A549 (cell line): ENCODE measurements at regions of chr15 and their contacts with region 1.

Region 1: DNA sequence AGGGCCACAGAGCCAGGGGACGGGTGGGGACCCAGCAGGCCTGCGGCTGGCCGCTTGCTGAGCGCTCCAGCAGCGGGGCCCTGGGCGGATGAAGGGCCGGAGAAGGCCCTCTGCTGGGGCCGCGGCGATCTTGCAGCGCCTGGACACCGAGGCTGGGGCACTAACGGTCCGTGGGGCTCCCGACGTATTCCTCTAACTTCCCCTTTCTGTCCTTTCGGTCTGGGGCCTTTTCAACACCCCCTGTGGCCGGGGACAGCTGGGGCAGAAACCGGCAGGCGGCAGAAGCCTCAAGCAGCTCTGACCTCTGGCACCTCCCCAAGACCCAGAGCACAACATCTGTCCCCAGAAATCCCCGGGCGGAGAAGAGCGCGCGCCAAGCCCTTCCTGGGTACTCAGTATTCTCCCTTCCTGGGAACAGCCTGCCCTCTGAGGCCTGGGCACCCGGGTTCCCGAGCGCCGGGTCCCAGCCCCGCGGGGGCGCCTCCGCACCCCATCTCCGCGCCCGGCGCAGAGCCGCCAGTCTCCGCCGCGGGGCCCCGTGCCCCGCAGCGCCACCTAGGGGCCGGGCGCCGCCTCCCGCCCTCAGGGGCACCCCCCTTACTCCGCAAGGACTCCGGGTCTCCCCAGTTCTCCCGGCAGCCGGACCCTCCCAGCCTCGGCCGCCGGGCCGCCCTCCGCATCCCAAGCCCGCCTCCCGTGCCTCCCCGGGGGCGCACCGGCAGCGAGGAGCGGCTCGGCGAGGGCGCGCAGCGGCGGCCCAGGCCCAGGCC is 582 bp upstream of the SLCO3A1 start:
- DNase-seq: peak; percentile 79 to 92
- ATAC-seq: peak; percentile 77 to 88
- H3K4me3 ChIP-seq: peak overlapping the region; percentile 94
- H3K27ac ChIP-seq: peak overlapping the region; percentile 98 to 99
- H3K4me1 ChIP-seq: peaks cover 16% of the 10 kb centered on the region
- CTCF ChIP-seq: peak; percentile 99
- EP300 ChIP-seq: no peak
- POLR2A ChIP-seq: peak; percentile 49
- RAD21 ChIP-seq: peak; percentile 27 to 48; a peak in 4 of 5 replicates

Region 2: DNA sequence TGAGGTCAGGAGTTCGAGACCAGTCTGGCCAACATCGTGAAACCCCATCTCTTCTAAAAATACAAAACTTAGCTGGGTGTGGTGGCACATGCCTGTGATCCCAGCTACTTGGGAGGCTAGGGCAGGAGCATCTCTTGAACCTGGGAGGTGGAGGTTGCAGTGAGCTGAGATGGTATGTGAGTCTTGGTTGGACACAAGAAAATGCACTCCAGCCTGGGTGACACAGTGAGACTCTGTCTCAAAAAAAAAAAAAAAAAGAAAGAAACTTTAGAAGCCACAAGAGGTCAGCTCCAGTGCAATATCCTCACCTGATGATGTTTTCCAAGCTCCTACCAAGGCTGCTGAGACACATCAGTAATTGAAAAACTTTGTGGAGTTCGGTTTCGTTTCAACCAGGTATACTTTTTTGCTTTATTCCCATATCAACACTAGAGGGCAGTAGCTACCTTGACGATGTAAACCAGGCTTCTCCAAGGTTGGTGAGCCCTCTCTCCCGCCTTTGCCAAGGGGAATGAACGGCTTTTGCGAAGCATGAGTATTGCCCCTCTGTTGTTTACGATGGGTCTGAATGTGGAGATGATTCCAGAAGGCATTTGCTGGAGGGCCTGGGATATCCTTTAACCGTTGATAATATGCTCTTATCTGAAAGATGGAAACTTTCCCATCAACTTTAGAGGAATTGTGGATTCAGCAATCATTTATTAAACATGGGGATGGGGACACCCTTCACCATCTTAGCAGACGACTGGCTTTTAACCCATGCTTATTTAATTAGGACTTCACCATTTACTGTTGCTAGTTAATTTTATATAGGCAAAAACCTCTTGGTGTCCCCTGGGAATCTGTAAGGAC is 550.1 kb before region 1 on chr15:
- CTCF ChIA-PET with region 1: interaction called, 83 read pairs
- POLR2A ChIA-PET with region 1: no interaction called
- DNase-seq: peak; percentile 71 to 80
- ATAC-seq: peak; percentile 75 to 95; a peak in 5 of 6 replicates
- H3K4me3 ChIP-seq: no peak overlapping the region
- H3K27ac ChIP-seq: no peak overlapping the region
- H3K4me1 ChIP-seq: no peaks in the 10 kb centered on the region
- CTCF ChIP-seq: peak; percentile 94
- EP300 ChIP-seq: no peak
- POLR2A ChIP-seq: no peak
- RAD21 ChIP-seq: peak; percentile 95 to 96

Region 3: DNA sequence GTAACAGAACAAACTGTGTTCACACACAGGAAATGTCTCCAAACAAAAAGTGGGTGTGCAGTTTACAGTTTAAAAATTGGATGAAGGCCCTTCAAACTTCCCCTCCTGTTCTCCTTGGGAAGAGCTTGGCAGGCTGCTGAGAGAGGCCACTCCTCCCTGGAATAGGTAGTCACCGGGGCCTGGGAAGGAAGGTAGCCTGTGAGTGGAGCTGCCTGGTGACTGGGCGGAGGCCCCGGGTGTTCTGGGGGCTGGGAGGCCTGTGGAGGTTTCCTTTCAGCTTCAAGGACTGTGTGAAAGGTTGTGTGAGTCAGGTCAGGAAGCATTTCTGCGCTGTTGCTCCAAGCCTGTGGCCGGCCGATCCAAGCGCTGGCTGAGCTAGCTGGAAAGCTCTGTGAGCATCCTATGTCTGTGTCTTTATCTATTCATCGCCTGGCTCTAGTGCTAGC is 14.7 kb after region 1 on chr15:
- CTCF ChIA-PET with region 1: interaction called, 42 read pairs
- POLR2A ChIA-PET with region 1: interaction called, 17 read pairs
- DNase-seq: peak; percentile 73 to 78
- ATAC-seq: peak; percentile 98 to 99
- H3K4me3 ChIP-seq: no peak overlapping the region
- H3K27ac ChIP-seq: peak overlapping the region; percentile 40 to 79
- H3K4me1 ChIP-seq: peaks cover 28% of the 10 kb centered on the region
- CTCF ChIP-seq: no peak
- EP300 ChIP-seq: no peak
- POLR2A ChIP-seq: no peak
- RAD21 ChIP-seq: no peak

Region 4: DNA sequence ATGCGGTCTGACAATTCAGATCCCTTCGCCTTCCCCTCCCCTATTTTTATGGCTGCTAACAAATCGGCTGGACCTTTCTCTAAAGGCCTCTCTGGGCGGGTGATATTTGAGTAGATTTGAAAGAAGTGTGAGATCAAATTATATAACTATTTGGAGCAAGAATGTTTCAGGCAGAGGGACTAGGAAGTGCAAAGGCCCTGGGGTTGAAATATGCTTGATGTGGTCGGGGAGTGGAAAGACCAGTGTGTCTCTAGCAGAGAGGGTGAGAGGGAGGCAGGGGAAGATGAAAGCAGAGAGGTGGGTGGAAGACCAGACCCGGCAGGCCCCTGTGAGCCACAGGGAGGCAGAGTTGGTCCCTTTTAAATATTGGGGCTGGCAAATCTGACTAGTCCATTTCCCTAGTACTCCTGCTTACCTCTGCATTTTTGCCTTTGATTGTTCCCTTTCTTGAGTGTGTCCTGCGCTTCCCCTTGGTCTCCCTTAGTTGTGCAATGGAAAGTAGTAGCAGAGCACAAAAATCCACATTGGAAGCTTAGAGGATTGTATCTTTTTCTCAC is 32.9 kb after region 1 on chr15:
- CTCF ChIA-PET with region 1: interaction called, 10 read pairs
- POLR2A ChIA-PET with region 1: interaction called, 5 read pairs
- DNase-seq: no peak
- ATAC-seq: peak in 1 of 2 experiments; percentile 55; a peak in 3 of 6 replicates
- H3K4me3 ChIP-seq: no peak overlapping the region
- H3K27ac ChIP-seq: no peak overlapping the region
- H3K4me1 ChIP-seq: peaks cover 8% of the 10 kb centered on the region
- CTCF ChIP-seq: 0 out of 3 replicates have a peak, but pooled peaks have one; percentile 15
- EP300 ChIP-seq: no peak
- POLR2A ChIP-seq: no peak
- RAD21 ChIP-seq: peak; percentile 32 to 38; a peak in 4 of 5 replicates

Region 5: DNA sequence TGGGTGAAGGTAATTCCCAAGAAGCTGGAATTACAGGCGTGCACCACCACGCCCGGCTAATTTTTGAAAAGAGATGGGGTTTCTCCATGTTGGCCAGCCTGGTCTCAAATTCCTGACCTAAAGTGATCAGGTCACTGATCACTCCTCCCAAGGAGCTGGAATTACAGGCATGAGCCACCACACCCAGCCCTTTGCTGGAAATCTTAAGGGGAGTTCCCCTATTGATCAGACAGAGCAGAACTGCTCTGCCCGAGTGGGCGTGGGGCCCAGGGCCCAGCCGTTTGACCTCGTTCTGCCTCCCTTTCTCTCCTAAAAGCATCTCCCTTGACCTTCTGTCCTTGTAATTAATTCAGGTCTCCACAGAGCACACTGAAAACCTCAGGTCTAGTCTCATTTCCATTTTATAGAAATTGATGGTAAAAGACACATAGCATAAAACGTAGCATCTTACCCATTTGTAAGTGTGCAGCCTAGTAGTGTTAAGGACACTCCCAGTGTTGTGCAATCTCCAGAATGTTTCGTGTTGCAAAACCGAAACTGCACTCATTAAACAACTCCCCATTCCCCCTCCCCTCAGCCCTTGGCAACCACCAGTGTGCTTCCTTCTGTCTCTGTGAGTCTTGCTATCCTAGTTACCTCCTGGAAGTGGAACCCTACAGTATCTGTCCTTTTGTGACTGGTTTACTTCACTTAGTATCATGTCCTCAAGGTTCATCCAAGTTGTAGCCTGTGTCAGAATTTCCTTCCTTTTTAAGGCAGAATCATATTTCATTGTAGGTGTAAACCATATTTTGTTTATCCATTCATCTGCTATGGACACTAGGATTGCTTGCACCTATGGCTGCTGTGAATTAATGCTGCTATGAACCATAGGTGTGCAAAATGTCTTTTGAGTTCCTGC is 90.0 kb after region 1 on chr15:
- CTCF ChIA-PET with region 1: interaction called, 69 read pairs
- POLR2A ChIA-PET with region 1: interaction called, 5 read pairs
- DNase-seq: peak; percentile 64 to 84
- ATAC-seq: peak; percentile 75 to 85
- H3K4me3 ChIP-seq: peak overlapping the region; percentile 23; the same call in 1 of the 3 replicates
- H3K27ac ChIP-seq: peak overlapping the region; percentile 53 to 77
- H3K4me1 ChIP-seq: peaks cover 57% of the 10 kb centered on the region
- CTCF ChIP-seq: no peak
- EP300 ChIP-seq: no peak
- POLR2A ChIP-seq: no peak
- RAD21 ChIP-seq: no peak

Region 6: GRCh38 chr15:91956026-91956723 is 103.2 kb after region 1 on chr15:
- CTCF ChIA-PET with region 1: interaction called, 10 read pairs
- POLR2A ChIA-PET with region 1: no interaction called
- DNase-seq: no peak
- ATAC-seq: peak in 1 of 2 experiments; percentile 33; a peak in 2 of 6 replicates
- H3K4me3 ChIP-seq: no peak overlapping the region
- H3K27ac ChIP-seq: peak overlapping the region in 1 of 2 experiments; percentile 50; a peak in 3 of 6 replicates
- H3K4me1 ChIP-seq: peaks cover 26% of the 10 kb centered on the region
- CTCF ChIP-seq: no peak
- EP300 ChIP-seq: no peak
- POLR2A ChIP-seq: no peak
- RAD21 ChIP-seq: no peak

Region 7: DNA sequence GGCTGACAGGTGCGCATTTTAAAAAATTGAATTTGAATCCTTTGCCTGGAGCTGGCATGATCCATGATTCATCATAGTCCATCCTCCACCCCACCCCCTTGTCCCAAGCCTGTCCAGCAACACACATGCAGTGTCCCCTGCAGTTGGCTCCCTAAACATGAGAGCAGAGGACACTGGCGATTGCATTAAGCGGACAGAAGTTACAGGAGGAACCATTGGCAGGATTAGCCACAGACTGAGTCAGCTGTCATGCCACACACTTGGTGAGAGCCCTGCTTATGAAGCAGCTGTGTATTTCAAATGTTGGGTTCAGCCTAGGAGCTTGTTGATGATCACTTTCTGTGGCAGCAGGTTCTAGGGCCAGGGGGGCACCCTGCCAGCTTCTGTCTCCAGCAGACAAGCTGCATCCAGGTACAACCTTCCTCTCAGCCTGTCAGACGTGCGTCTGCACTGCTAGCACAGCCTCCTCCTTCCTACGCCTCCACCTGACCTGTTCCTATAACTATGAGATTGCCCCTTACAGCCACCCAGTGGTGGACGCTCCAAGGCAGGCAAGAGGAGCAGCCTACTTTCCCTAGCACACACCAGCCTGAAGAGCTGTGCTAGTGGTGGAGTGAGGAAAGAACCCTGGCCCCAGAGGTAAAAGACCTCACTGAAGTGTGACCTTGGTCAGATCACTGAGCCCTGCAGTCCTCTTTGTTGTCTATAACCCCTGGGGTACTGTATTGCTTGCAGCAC is 122.5 kb after region 1 on chr15:
- CTCF ChIA-PET with region 1: interaction called, 149 read pairs
- POLR2A ChIA-PET with region 1: interaction called, 4 read pairs
- DNase-seq: no peak
- ATAC-seq: peak; percentile 75 to 81; a peak in 5 of 6 replicates
- H3K4me3 ChIP-seq: no peak overlapping the region
- H3K27ac ChIP-seq: peak overlapping the region in 1 of 2 experiments; percentile 17; a peak in 1 of 6 replicates
- H3K4me1 ChIP-seq: peaks cover 22% of the 10 kb centered on the region
- CTCF ChIP-seq: no peak
- EP300 ChIP-seq: no peak
- POLR2A ChIP-seq: no peak
- RAD21 ChIP-seq: no peak